Cardiac septum (tissue), 1 donor: ENCODE measurements at regions of chr19 and their contacts with region 1.

Region 1: DNA sequence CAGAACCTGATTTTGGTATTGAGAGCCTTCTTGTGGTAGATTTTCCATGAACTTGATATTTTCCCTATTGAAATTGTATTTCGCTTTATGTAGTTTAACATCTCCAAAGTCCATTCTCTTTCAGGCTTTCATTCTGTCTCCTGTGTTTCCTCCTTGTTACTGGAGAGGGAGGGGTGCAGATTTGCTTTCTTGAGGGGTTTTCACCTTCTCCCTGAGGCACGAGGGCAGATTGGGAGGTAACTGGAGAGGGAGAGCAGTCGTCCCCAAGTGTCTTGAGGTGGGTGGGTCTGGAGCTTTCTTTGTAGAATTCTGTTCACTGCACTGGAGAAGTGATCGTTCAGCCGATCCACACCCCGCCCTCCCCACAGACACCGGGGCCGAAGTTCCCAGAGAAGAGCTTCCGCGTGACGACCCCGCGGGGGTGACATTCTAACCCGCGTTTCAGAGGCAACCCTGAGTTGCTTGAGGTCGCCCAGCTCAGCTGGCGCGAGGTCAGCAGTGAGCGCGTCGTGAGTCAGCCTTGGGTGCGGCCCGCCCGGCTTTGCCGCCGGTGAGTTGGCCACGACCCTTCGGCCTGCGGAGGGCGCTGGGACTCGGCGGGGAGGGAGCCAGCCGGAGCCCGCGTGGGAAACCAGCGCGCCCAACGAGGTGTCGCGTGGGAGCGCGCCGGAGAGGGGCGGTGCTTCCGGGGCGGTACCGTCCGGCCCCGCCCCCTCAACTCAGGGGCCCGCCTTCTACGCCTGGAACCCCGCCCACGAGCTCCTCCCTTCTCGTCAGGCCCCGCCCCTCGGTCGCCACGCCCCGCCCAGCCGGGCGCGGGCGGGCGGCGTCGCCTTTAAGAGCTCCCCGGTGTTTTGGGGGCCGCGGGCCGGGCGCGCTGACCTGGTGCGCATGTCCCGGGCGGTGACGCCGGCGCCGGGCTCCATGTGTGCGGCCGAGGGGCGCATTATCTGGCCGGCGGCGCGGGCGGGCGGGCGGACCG is at the start of gene GATAD2A:
- DNase-seq: peak; percentile 98
- total RNA-seq, gene GATAD2A: 39.9 TPM

Region 2: DNA sequence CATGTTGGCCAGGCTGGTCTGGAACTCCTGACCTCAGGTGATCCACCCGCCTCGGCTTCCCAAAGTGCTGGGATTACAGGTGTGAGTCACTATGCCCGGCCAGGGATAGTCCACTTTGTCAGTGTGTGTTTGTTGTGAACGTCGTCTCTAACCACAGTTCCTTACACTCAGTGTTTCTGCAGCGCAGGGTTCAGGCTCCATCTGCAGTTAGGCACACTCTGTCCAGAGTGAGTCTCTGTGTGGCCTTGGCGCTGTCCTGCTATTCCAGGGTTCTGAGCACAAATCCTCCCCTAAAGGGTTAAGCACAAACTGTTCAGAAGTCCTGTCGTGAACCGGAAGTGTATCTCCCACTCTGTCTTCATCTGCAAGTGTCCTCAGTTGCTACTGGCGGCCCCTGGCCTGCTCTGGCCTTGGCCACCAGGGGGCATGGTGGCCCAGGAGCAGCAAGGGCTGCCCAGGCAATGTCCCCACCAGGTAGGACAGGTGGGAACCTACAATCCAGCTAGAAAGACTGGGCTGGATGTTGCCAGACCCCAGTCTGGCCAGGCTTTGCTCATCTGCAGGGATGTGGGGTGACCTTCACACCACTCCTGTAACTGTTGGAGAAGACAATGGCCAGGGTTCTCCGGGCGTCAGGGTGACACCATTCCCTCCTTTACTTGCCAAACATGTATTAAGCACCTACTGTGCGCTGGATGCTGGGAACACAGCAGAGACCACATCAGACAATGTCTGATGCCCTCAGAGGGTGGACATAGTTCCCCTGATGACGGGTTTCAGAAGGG is 38.4 kb before region 1 on chr19:
- intact Hi-C with region 1: loop called (anchors 1 kb)
- DNase-seq: peak; percentile 89

Region 3: GRCh38 chr19:19445911-19446361 is 40.8 kb after region 1 on chr19:
- intact Hi-C with region 1: no loop called
- DNase-seq: no peak

Region 4: GRCh38 chr19:19459707-19460251 is 54.6 kb after region 1 on chr19:
- intact Hi-C with region 1: loop called (anchors 5 kb)
- DNase-seq: peak; percentile 88

Region 5: GRCh38 chr19:19488875-19489690 is 83.9 kb after region 1 on chr19:
- intact Hi-C with region 1: loop called (anchors 1 kb)
- DNase-seq: peak; percentile 83